ENCODE measurements at regions of chr18 and their contacts with region 1.

Region 1: DNA sequence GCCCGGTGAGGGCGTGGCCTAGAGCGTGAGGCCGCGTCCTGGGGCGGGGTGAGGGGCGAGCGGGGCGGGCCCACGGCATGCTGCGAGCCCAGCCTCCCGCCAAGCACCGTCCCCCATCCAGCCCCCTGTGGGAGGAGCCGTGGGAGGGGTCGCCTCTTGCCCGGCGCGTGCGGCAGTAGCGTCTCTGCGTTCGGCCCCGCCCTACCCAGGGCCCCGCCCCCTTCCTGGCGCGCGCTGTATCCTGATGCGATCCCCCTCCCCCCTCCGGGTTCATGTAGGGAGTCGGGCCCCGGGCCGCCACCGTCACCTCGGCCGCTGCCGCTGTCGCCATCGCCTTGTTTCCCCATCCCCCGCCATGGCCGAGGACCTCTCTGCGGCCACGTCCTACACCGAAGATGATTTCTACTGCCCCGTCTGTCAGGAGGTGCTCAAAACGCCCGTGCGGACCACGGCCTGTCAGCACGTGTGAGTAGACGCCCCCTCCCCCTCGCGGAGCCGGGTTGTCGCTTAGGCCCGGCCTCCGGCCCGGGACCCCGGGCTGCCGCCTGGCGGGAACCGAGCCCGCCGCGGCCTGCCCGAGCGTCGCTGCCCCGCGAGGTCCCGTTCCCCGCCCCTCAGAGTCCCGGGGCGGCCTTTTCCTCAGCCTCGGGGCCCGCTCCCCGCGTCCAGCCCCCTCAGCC is 888 bp downstream of the RNF138 start:
- DNase-seq: peak; percentile 99 to 100 (median 100)
- ATAC-seq: peak; percentile 90
- H3K4me3 ChIP-seq: peak overlapping the region; percentile 90 to 95
- H3K4me3 Mint-ChIP-seq: peak overlapping the region; percentile 99
- H3K27ac ChIP-seq: peak overlapping the region; percentile 94 to 99
- H3K27ac Mint-ChIP-seq: peak overlapping the region; percentile 98
- H3K4me1 ChIP-seq: peaks cover 33% of the 10 kb centered on the region
- H3K4me1 Mint-ChIP-seq: peaks cover 49% of the 10 kb centered on the region
- H3K27me3 ChIP-seq: no peaks in the 10 kb centered on the region
- H3K27me3 Mint-ChIP-seq: no peaks in the 10 kb centered on the region
- CTCF ChIP-seq: no peak

Region 2: GRCh38 chr18:31942999-31943865 is 149.3 kb before region 1 on chr18 and contains the start of gene TRAPPC8:
- CTCF ChIA-PET with region 1: no interaction called
- POLR2A ChIA-PET with region 1: interaction called, 33 read pairs
- intact Hi-C with region 1: loop called (anchors 1 kb)
- DNase-seq: peak; percentile 80 to 97 (median 90)
- ATAC-seq: peak; percentile 87
- H3K4me3 ChIP-seq: peak within 1 kb of the TSS; percentile 97 to 98
- H3K4me3 Mint-ChIP-seq: peak within 1 kb of the TSS; percentile 99
- H3K27ac ChIP-seq: peak within 1 kb of the TSS; percentile 90 to 98
- H3K27ac Mint-ChIP-seq: peak within 1 kb of the TSS; percentile 98
- H3K4me1 ChIP-seq: peaks cover 25% of the 10 kb centered on the region
- H3K4me1 Mint-ChIP-seq: peaks cover 46% of the 10 kb centered on the region
- H3K27me3 ChIP-seq: no peaks in the 10 kb centered on the region
- H3K27me3 Mint-ChIP-seq: no peaks in the 10 kb centered on the region
- CTCF ChIP-seq: no peak
- total RNA-seq, gene TRAPPC8: 23.6 to 24.9 TPM

Region 3: GRCh38 chr18:32040936-32041335 is 51.6 kb before region 1 on chr18:
- CTCF ChIA-PET with region 1: no interaction called
- POLR2A ChIA-PET with region 1: no interaction called
- intact Hi-C with region 1: loop called in 1 of 2 experiments (anchors 2 kb)
- DNase-seq: peak in 8 of 9 experiments; percentile 27 to 86 (median 54)
- ATAC-seq: peak; percentile 79
- H3K4me3 ChIP-seq: peak overlapping the region in 1 of 2 experiments; percentile 9
- H3K4me3 Mint-ChIP-seq: peak overlapping the region; percentile 60
- H3K27ac ChIP-seq: peak overlapping the region in 1 of 2 experiments; percentile 55
- H3K27ac Mint-ChIP-seq: peak overlapping the region; percentile 68
- H3K4me1 ChIP-seq: peaks cover 44% of the 10 kb centered on the region
- H3K4me1 Mint-ChIP-seq: peaks cover 58% of the 10 kb centered on the region
- H3K27me3 ChIP-seq: no peaks in the 10 kb centered on the region
- H3K27me3 Mint-ChIP-seq: no peaks in the 10 kb centered on the region
- CTCF ChIP-seq: no peak

Region 4: GRCh38 chr18:32072321-32072720 is 20.2 kb before region 1 on chr18:
- CTCF ChIA-PET with region 1: interaction called, 12 read pairs
- POLR2A ChIA-PET with region 1: interaction called, 10 read pairs
- intact Hi-C with region 1: loop called in 1 of 2 experiments (anchors 2 kb)
- DNase-seq: peak in 2 of 9 experiments; percentile 50 to 65
- ATAC-seq: peak; percentile 48
- H3K4me3 ChIP-seq: no peak overlapping the region
- H3K4me3 Mint-ChIP-seq: no peak overlapping the region
- H3K27ac ChIP-seq: no peak overlapping the region
- H3K27ac Mint-ChIP-seq: no peak overlapping the region
- H3K4me1 ChIP-seq: no peaks in the 10 kb centered on the region
- H3K4me1 Mint-ChIP-seq: peaks cover 17% of the 10 kb centered on the region
- H3K27me3 ChIP-seq: no peaks in the 10 kb centered on the region
- H3K27me3 Mint-ChIP-seq: no peaks in the 10 kb centered on the region
- CTCF ChIP-seq: peak; percentile 65

Region 5: GRCh38 chr18:32138332-32138982 is 45.9 kb after region 1 on chr18:
- CTCF ChIA-PET with region 1: no interaction called
- POLR2A ChIA-PET with region 1: interaction called, 4 read pairs
- intact Hi-C with region 1: loop called in 1 of 2 experiments (anchors 5 kb)
- DNase-seq: peak in 2 of 9 experiments; percentile 31 to 33
- ATAC-seq: peak; percentile 55
- H3K4me3 ChIP-seq: no peak overlapping the region
- H3K4me3 Mint-ChIP-seq: no peak overlapping the region
- H3K27ac ChIP-seq: no peak overlapping the region
- H3K27ac Mint-ChIP-seq: peak overlapping the region; percentile 67
- H3K4me1 ChIP-seq: peaks cover 10% of the 10 kb centered on the region
- H3K4me1 Mint-ChIP-seq: peaks cover 6% of the 10 kb centered on the region
- H3K27me3 ChIP-seq: no peaks in the 10 kb centered on the region
- H3K27me3 Mint-ChIP-seq: no peaks in the 10 kb centered on the region
- CTCF ChIP-seq: no peak

Region 6: GRCh38 chr18:32271672-32272208 is 179.2 kb after region 1 on chr18:
- CTCF ChIA-PET with region 1: no interaction called
- POLR2A ChIA-PET with region 1: no interaction called
- intact Hi-C with region 1: no loop called
- DNase-seq: peak in 2 of 9 experiments; percentile 9 to 27
- ATAC-seq: no peak
- H3K4me3 ChIP-seq: no peak overlapping the region
- H3K4me3 Mint-ChIP-seq: no peak overlapping the region
- H3K27ac ChIP-seq: no peak overlapping the region
- H3K27ac Mint-ChIP-seq: no peak overlapping the region
- H3K4me1 ChIP-seq: no peaks in the 10 kb centered on the region
- H3K4me1 Mint-ChIP-seq: no peaks in the 10 kb centered on the region
- H3K27me3 ChIP-seq: no peaks in the 10 kb centered on the region
- H3K27me3 Mint-ChIP-seq: peaks cover 11% of the 10 kb centered on the region
- CTCF ChIP-seq: peak; percentile 33

Measured in CD8-positive, alpha-beta T cell (primary cell).